Activated CD4-positive, alpha-beta memory T cell treated with anti-CD3 and anti-CD28 coated beads, Interleukin-2, amount 10 ng/mL, durations not matched to agents 7 days and 5 days (primary cell): ENCODE measurements at regions of chr4 and their contacts with region 1.

Region 1: GRCh38 chr4:75895744-75896314 is 6.4 kb downstream of the PPEF2 start:
- DNase-seq: no peak
- H3K4me3 Mint-ChIP-seq: no peak overlapping the region
- H3K27ac Mint-ChIP-seq: no peak overlapping the region
- H3K4me1 Mint-ChIP-seq: no peaks in the 10 kb centered on the region
- H3K27me3 Mint-ChIP-seq: peaks cover 3% of the 10 kb centered on the region

Region 2: DNA sequence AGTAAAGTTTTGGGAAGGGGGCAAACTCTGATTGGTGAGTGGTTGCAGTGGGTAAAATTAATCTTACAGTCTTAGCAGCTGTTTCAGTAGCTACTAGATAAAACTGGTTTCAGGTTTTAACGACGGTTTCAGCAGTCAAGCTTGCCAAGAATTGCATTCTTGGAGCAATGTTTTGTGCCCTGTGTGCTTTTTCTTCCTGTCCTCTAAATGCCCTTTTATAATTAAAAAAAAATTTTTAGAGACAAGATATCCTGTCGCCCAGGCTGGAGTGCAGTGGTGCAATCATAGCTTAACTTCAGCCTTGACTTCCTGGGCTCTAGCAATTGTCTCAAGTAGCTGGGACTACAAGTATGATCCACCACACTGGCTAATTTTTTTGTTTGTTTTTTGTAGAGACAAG is 12.7 kb after region 1 on chr4:
- CTCF ChIA-PET with region 1: interaction called, 15 read pairs
- POLR2A ChIA-PET with region 1: no interaction called
- DNase-seq: no peak
- H3K4me3 Mint-ChIP-seq: no peak overlapping the region
- H3K27ac Mint-ChIP-seq: no peak overlapping the region
- H3K4me1 Mint-ChIP-seq: no peaks in the 10 kb centered on the region
- H3K27me3 Mint-ChIP-seq: no peaks in the 10 kb centered on the region

Region 3: GRCh38 chr4:75916091-75916661 is 20.3 kb after region 1 on chr4:
- CTCF ChIA-PET with region 1: interaction called, 26 read pairs
- POLR2A ChIA-PET with region 1: no interaction called
- DNase-seq: peak; percentile 37
- H3K4me3 Mint-ChIP-seq: no peak overlapping the region
- H3K27ac Mint-ChIP-seq: no peak overlapping the region
- H3K4me1 Mint-ChIP-seq: no peaks in the 10 kb centered on the region
- H3K27me3 Mint-ChIP-seq: no peaks in the 10 kb centered on the region